Left colon (tissue), 2 donors: ENCODE measurements at regions of chr11 and their contacts with region 1.

Region 1: DNA sequence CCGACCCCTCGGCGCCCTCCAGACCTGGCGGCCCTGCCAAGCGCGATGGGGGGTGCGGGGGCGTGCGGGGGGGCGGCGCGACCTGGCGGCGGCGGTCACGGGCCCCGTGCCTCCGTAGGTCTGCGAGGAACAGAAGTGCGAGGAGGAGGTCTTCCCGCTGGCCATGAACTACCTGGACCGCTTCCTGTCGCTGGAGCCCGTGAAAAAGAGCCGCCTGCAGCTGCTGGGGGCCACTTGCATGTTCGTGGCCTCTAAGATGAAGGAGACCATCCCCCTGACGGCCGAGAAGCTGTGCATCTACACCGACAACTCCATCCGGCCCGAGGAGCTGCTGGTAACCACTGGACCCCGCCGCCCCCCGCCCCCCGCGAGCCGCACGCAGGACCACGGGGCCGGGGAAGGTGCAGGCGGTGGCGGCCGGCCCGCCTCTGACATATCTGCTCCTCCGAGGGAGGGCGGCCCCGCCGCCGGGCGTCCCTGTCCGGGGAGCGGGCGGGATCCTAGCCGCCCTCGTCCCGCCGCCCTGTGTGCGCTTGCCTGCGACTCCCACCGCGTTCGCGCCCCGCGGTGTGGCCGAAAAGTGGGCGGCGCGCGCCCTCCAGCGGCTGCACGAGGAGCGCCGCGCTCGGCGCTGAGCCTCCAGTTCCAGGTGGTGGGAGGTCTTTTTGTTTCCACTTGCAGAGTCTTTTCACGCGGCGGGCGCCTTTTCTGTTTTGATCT is 2.1 kb downstream of the CCND1 start:
- DNase-seq: peak; percentile 52 to 84
- ATAC-seq: peak; percentile 56

Region 2: GRCh38 chr11:69101115-69101791 is 541.8 kb before region 1 on chr11:
- intact Hi-C with region 1: loop called (anchors 5 kb)
- DNase-seq: peak; percentile 78 to 79
- ATAC-seq: peak; percentile 86

Region 3: DNA sequence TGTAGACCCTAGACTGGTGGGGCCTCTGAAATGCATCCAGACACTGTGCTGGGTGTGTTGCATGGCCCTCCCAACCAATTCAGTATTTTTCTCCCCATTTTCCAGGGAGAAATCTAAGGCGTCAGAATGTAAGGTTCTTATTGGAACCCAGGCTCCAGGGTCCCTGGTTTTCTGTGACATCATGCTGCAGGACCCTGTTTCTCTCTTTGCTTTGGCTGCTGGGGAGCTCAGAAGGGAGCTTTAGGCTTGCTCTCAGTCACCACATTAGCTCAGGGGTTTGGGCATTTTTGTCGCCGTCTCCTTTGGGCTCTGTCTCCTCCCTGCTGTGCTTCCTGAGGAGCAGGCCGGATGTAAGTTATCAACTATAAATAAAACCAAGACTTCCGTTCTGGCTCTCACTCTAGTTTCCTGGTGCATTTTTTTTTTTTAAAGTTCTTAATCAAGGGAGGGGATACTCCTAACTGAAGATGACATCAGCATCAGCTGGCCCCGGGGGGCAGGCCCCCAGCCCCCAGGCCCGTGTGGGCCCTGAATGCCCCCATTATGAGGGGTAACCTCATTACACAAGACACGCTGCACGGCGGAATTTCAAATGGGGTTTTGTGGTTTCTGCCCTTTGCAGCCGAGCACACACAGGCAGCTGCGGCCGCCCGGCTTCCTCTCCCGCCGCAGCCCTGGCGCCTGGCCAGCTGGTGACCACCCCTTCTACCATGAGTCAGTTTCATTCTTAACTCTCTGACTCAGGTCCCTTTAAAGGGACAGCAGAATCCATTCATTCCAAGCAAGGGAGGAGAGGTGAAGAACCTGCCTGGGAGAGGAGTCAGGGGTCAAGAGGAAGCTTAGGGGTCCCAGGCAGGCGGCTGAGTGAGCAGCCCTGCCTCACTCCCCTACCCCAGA is 345.9 kb before region 1 on chr11:
- intact Hi-C with region 1: loop called (anchors 10 kb)
- DNase-seq: peak; percentile 92 to 93
- ATAC-seq: peak; percentile 58

Region 4: GRCh38 chr11:69598157-69598556 is 44.9 kb before region 1 on chr11:
- intact Hi-C with region 1: no loop called
- DNase-seq: peak in 1 of 2 donors; percentile 12
- ATAC-seq: peak; percentile 55